Activated T-helper 1 cell treated with anti-CD3 and anti-CD28 coated beads, Interleukin-12 subunit alpha, Interleukin-12 subunit beta, Interleukin-2, Interleukin-4 antibody, amounts not matched to agents 30 ng/mL and 10 ng/mL and 1 ng/mL, durations not matched to agents 14 hours and 24 hours and 36 hours (primary cell): ENCODE measurements at regions of chr17 and their contacts with region 1.

Region 1: DNA sequence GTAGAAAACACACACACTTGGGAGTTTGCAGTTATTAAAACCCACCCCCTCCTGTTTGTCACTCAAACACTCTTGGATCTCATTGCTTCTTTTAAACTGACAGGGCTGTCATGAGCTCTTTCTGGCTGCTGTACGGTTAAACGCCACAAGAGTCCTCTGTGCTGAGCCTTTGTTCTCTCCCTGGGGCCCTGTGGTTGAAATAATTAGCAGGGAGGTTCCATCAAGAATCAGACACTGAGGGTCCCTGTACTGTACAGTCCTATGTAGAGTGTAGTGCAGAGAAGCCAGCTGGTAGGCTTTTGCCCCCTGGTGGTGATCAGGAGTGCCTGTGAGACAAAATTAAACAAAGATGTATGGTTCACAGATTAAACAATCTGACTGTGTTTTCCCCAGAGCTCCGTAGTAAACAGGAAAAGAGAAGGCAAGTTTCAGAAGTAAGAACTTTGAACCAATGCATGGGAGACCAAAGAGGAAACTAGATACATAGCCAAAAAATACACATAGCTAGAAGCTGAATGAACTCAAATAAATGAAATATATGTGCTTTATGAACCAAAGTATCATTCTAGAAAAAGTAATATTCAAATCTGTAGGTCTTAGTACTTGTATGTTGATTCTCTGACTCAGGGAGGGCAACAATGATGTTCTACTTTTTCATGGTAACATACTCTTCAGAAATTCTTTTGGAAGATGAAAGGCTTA is 1.4 kb upstream of the SSH2 start:
- DNase-seq: peak; percentile 62
- H3K4me3 Mint-ChIP-seq: no peak overlapping the region
- H3K27ac Mint-ChIP-seq: no peak overlapping the region
- H3K4me1 Mint-ChIP-seq: peaks cover 28% of the 10 kb centered on the region
- H3K27me3 Mint-ChIP-seq: peaks cover 1% of the 10 kb centered on the region

Region 2: GRCh38 chr17:29568331-29569244 is 362.8 kb before region 1 on chr17 and contains the start of gene TP53I13:
- intact Hi-C with region 1: loop called (anchors 5 kb)
- DNase-seq: peak; percentile 87
- H3K4me3 Mint-ChIP-seq: peak within 1 kb of the TSS; percentile 89
- H3K27ac Mint-ChIP-seq: peak within 1 kb of the TSS; percentile 95
- H3K4me1 Mint-ChIP-seq: peaks cover 20% of the 10 kb centered on the region
- H3K27me3 Mint-ChIP-seq: peaks cover 1% of the 10 kb centered on the region
- total RNA-seq, gene TP53I13: 67.4 and 71.8 TPM in 2 replicates

Region 3: GRCh38 chr17:29617125-29617480 is 314.3 kb before region 1 on chr17:
- intact Hi-C with region 1: loop called (anchors 2 kb)
- DNase-seq: peak; percentile 86
- H3K4me3 Mint-ChIP-seq: peak overlapping the region; percentile 81
- H3K27ac Mint-ChIP-seq: peak overlapping the region; percentile 66
- H3K4me1 Mint-ChIP-seq: peaks cover 40% of the 10 kb centered on the region
- H3K27me3 Mint-ChIP-seq: peaks cover 8% of the 10 kb centered on the region

Region 4: GRCh38 chr17:29760761-29761696 is 170.4 kb before region 1 on chr17:
- intact Hi-C with region 1: loop called (anchors 2 kb)
- DNase-seq: peak; percentile 91
- H3K4me3 Mint-ChIP-seq: peak overlapping the region; percentile 97
- H3K27ac Mint-ChIP-seq: peak overlapping the region; percentile 92
- H3K4me1 Mint-ChIP-seq: peaks cover 36% of the 10 kb centered on the region
- H3K27me3 Mint-ChIP-seq: no peaks in the 10 kb centered on the region

Region 5: DNA sequence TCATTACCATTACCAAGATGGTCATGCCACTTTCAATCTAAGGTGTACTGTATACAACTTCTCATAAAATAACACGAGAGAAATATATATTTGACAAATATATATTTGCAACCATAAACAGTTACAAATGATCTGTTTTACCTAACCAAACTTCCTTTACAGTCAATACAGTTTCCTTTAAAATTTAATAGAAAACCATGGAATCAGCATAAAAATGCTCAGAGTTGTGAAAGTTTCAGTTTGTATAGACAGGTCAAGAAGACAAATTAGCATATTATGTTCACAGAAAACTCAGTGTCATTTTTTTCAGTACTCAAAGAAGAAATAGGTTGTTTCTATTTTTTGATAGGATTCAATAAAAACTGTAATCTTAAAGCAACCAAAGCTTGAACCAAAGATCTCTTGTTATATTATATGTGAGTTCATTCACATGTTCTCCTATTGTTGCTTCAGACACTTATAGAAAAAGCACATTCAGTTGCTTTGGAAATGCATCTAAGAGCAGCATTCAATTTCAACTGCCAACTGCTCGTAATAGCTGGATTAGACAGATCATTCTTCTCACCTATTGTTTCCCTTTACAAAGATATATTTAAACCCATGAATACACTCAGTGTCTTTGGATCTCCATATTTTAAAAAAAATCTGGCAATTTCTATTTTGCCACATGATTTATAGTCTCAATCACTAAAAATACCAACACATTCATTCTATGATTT is 16.4 kb before region 1 on chr17:
- intact Hi-C with region 1: loop called (anchors 2 kb)
- DNase-seq: no peak
- H3K4me3 Mint-ChIP-seq: no peak overlapping the region
- H3K27ac Mint-ChIP-seq: no peak overlapping the region
- H3K4me1 Mint-ChIP-seq: peaks cover 28% of the 10 kb centered on the region
- H3K27me3 Mint-ChIP-seq: no peaks in the 10 kb centered on the region

Region 6: DNA sequence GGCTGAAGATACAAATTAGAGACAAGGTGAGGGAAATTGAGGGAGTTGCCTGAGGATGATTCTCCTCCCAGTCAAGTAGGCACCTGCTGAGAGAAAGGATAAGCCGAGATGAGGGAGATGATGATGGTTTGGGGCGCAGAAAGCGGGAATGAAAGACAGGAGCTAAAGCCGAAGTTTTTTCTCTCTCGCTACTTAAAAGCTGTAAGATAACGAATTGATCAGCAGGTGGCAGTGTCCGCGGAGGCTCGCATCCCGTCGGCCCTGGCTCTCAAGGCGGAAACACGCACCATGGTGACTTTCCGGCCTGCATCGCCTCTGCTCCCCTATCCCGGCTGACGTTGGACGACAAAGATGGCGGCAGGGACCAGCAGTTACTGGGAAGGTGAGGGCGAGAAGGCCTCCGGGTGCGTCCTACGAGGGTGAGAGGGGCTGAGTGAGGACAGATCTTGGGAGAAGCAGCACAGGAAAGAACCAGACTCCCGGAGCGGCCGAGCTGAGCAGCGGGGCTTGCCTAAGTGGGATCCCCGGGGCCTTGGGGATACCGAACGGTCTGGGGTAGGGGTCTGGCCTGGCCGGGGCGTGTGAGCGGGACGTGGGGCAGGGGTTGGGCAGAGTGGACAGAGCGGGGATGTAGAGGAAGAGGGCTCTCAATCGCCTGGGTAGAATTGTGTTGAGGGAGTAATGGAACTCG is 545.8 kb after region 1 on chr17 and contains the start of gene GOSR1:
- intact Hi-C with region 1: no loop called
- DNase-seq: peak; percentile 87
- H3K4me3 Mint-ChIP-seq: peak within 1 kb of the TSS; percentile 98
- H3K27ac Mint-ChIP-seq: peak within 1 kb of the TSS; percentile 98
- H3K4me1 Mint-ChIP-seq: peaks cover 34% of the 10 kb centered on the region
- H3K27me3 Mint-ChIP-seq: no peaks in the 10 kb centered on the region
- total RNA-seq, gene GOSR1: 61.5 and 66.6 TPM in 2 replicates